ENCODE measurements at regions of chr22 and their contacts with region 1.

Region 1: DNA sequence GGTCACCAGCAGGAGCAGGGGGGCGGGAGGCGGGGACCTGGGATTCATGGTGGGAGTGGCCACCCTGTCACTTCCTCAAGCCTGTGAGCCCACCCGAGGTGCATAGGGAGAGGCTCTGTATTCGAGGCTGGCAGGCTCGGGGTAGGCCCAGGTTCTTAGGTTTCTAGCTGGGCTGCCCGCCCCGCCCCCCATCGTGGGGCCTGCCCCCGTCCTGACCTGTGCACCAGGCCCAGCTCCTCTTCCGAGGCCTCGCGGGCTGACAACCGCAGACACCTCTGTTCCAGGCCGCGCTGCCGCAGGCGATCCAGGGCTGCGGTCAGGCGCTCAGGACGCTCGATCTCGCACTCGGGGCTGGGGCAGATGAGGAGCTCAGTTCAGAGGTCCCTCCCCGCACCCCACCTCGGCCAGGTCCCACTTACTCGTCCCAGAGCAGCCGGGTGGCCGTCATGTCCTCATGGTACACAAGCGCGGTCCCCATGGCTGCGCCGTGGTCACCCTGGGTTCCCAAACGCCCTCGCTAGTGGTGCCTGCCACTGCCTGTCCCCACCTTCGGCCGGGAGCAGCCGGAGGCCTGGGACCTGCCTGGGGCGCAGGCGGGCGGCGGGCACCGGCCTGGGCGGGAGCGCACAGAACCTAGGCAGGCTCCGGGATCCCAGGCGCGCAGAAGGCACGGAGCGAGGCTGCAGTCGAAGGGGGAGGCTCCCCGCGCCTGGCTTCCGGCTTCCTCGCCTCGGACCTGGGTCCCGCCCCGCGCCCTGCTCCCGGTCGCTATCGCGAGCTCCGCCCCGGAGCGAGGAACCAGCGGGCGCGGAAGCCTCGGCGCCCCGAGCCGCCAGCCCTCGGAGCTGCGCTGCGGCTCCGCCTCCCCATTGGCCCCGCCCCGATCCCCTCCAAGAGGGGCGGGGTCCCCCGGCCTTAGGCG is at the start of gene HDAC10:
- DNase-seq: peak; percentile 90
- H3K4me3 Mint-ChIP-seq: peak within 1 kb of the TSS; percentile 81
- H3K27ac Mint-ChIP-seq: no peak within 1 kb of the TSS
- H3K4me1 Mint-ChIP-seq: peaks cover 19% of the 10 kb centered on the region
- H3K27me3 Mint-ChIP-seq: no peaks in the 10 kb centered on the region
- total RNA-seq, gene HDAC10: 35.4 to 38.0 TPM

Region 2: GRCh38 chr22:50058061-50058905 is 192.5 kb before region 1 on chr22 and contains the start of gene TTLL8:
- CTCF ChIA-PET with region 1: no interaction called
- intact Hi-C with region 1: no loop called
- DNase-seq: no peak
- H3K4me3 Mint-ChIP-seq: no peak within 1 kb of the TSS
- H3K27ac Mint-ChIP-seq: no peak within 1 kb of the TSS
- H3K4me1 Mint-ChIP-seq: peaks cover 2% of the 10 kb centered on the region
- H3K27me3 Mint-ChIP-seq: peaks cover 31% of the 10 kb centered on the region
- total RNA-seq, gene TTLL8: not detected

Region 3: DNA sequence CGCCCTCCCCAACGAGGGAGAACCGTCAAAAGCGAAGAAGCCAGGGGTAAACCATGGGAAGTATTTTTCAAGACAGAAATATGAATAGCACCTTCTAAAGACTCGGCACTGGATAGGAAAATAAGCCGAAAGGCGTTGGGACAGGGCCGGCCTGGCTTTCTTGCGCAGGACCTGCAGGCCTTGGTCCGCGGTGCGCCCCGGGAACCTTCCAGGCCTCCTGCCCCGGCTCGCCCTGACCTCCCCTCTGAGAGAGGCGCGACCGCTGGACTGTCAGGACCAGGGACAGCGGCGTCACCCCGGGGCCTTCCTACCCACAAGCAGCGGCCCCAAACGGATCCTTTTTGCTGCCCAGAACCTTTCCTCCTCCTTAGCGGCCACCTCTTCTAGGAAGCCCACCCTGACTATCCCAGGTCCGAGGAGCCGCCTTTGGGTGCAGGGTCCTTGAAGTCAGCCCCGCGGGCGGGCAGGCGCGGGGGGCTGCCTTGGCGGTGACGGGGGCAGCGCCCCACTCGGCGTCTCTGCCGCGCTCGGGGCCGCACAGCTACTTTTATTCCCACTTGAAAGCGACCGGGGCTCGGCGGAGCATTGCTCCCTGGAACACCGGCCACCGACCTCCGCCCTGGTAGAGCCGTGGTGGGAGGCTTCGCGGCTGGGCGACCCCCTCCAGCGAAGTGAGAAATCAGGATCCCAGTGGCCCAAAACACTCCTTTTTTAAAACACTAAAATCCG is 20.0 kb after region 1 on chr22:
- CTCF ChIA-PET with region 1: interaction called, 5 read pairs
- intact Hi-C with region 1: loop called (anchors 1 kb)
- DNase-seq: peak; percentile 78
- H3K4me3 Mint-ChIP-seq: peak overlapping the region; percentile 66
- H3K27ac Mint-ChIP-seq: no peak overlapping the region
- H3K4me1 Mint-ChIP-seq: peaks cover 13% of the 10 kb centered on the region
- H3K27me3 Mint-ChIP-seq: no peaks in the 10 kb centered on the region

Region 4: GRCh38 chr22:50341977-50342650 is 91.3 kb after region 1 on chr22:
- CTCF ChIA-PET with region 1: interaction called, 25 read pairs
- intact Hi-C with region 1: loop called (anchors 1 kb)
- DNase-seq: peak; percentile 94
- H3K4me3 Mint-ChIP-seq: peak overlapping the region; percentile 71
- H3K27ac Mint-ChIP-seq: peak overlapping the region; percentile 82
- H3K4me1 Mint-ChIP-seq: peaks cover 8% of the 10 kb centered on the region
- H3K27me3 Mint-ChIP-seq: no peaks in the 10 kb centered on the region

Measured in activated naive CD4-positive, alpha-beta T cell treated with anti-CD3 and anti-CD28 coated beads for 36 hours (primary cell).